PC-9 (cell line): ENCODE measurements at regions of chr2 and their contacts with region 1.

Region 1: DNA sequence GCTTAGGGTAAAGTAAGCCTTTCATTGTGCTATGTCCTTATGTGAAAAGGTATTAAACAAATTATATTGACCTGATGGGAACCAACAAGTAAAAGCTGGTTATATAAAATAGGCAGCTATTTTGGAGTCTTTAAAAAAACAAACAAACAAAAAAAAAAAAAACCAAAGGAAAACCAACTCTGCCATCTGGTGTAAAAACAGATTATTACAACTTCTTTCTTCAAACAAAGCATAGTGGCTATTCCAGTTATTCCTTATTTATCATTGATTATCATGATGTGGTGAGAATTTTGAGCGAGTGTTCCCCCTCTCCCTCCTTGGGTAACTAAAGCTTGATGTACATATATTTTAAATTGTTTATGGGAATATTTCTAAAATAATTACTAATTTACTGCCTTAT is 122.4 kb upstream of the FHL2 start:
- DNase-seq: no peak
- H3K4me3 ChIP-seq: no peak overlapping the region
- H3K27ac ChIP-seq: no peak overlapping the region
- H3K4me1 ChIP-seq: peaks cover 6% of the 10 kb centered on the region
- H3K27me3 ChIP-seq: no peaks in the 10 kb centered on the region
- CTCF ChIP-seq: peak; percentile 84

Region 2: DNA sequence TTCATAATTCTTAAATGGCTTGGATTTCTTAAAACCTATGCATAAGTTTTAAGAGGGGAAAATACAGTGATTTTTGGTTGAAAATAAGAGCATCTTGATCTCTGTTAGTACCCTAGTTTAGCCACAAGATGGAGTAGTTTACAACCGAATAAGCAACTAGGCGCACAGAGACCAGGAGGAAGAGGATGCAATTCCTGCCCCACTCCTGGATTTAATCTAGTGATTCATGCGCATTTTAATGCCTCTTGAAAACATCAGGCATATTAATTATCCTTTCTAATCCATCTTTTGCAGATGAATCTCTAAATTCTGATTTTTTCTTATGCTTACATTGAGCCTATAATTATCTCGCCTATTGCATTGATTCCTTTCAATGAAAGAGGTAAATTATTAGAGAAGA is 406.7 kb before region 1 on chr2:
- CTCF ChIA-PET with region 1: no interaction called
- POLR2A ChIA-PET with region 1: no interaction called
- intact Hi-C with region 1: loop called (anchors 5 kb)
- DNase-seq: peak in 1 of 2 experiments; percentile 46
- H3K4me3 ChIP-seq: no peak overlapping the region
- H3K27ac ChIP-seq: no peak overlapping the region
- H3K4me1 ChIP-seq: no peaks in the 10 kb centered on the region
- H3K27me3 ChIP-seq: no peaks in the 10 kb centered on the region
- CTCF ChIP-seq: peak; percentile 88

Region 3: GRCh38 chr2:105337124-105338019 is 183.8 kb before region 1 on chr2 and contains the start of gene C2orf49:
- CTCF ChIA-PET with region 1: interaction called, 4 read pairs
- POLR2A ChIA-PET with region 1: interaction called, 10 read pairs
- intact Hi-C with region 1: no loop called
- DNase-seq: peak; percentile 63 to 77
- H3K4me3 ChIP-seq: peak within 1 kb of the TSS; percentile 100
- H3K27ac ChIP-seq: peak within 1 kb of the TSS; percentile 98
- H3K4me1 ChIP-seq: peaks cover 20% of the 10 kb centered on the region
- H3K27me3 ChIP-seq: no peaks in the 10 kb centered on the region
- CTCF ChIP-seq: no peak
- total RNA-seq, gene C2orf49: 16.2 and 19.8 TPM in 2 replicates

Region 4: GRCh38 chr2:105377819-105378218 is 143.4 kb before region 1 on chr2:
- CTCF ChIA-PET with region 1: interaction called, 3 read pairs
- POLR2A ChIA-PET with region 1: no interaction called
- intact Hi-C with region 1: loop called (anchors 1 kb)
- DNase-seq: no peak
- H3K4me3 ChIP-seq: no peak overlapping the region
- H3K27ac ChIP-seq: no peak overlapping the region
- H3K4me1 ChIP-seq: peaks cover 39% of the 10 kb centered on the region
- H3K27me3 ChIP-seq: no peaks in the 10 kb centered on the region
- CTCF ChIP-seq: no peak

Region 5: DNA sequence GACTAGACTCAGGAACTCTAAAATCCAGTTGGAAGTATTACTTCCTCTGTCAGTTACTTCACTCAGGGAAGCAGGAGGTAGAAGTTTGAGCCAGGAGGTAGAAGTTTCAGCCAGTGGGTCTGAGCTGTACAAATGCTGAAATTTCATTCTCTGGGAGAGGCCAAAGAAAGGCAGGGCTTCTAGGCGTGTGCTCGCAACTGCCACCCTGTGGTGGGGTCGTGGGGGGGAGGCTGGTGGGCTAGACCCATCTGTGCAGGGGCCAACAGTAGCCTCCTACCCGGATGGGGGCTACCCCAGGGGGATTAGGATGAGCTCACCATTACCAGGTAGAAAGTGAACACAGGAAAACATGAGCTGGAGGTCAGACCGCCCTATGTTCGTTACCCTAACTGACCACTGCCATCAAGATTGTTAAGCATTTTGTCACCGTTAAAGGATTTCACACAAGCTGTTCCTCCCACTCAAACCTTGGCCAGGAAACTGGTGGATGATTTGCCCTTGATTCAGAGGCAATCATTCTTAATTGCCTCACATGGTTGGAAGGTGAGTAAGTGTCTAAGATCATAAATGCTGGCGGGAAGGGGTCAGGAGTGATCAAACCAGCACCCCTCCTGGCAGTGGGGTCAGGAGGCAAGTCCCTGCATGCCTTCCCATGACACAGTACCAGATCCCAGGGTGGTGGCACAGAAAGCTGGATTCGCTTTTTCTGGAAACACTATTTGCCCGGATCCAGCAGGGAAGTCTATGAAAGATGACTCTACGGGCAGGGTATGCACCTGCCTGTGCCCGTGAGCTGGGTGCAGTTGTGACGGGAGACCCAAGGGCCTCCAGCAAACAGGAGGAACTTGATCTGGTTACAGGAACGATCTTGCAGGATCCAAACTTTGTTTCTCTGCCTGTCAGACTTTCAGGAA is 117.2 kb before region 1 on chr2:
- CTCF ChIA-PET with region 1: interaction called, 4 read pairs
- POLR2A ChIA-PET with region 1: interaction called, 4 read pairs
- intact Hi-C with region 1: loop called (anchors 2 kb)
- DNase-seq: peak; percentile 82 to 98
- H3K4me3 ChIP-seq: peak overlapping the region; percentile 41; the same call in 1 of the 2 replicates
- H3K27ac ChIP-seq: peak overlapping the region; percentile 96
- H3K4me1 ChIP-seq: peaks cover 77% of the 10 kb centered on the region
- H3K27me3 ChIP-seq: no peaks in the 10 kb centered on the region
- CTCF ChIP-seq: peak; percentile 64

Region 6: GRCh38 chr2:105416156-105416555 is 105.0 kb before region 1 on chr2:
- CTCF ChIA-PET with region 1: no interaction called
- POLR2A ChIA-PET with region 1: no interaction called
- intact Hi-C with region 1: no loop called
- DNase-seq: no peak
- H3K4me3 ChIP-seq: no peak overlapping the region
- H3K27ac ChIP-seq: no peak overlapping the region
- H3K4me1 ChIP-seq: peaks cover 14% of the 10 kb centered on the region
- H3K27me3 ChIP-seq: no peaks in the 10 kb centered on the region
- CTCF ChIP-seq: no peak

Region 7: GRCh38 chr2:105557021-105557920 is 36.1 kb after region 1 on chr2:
- CTCF ChIA-PET with region 1: no interaction called
- POLR2A ChIA-PET with region 1: no interaction called
- intact Hi-C with region 1: no loop called
- DNase-seq: no peak
- H3K4me3 ChIP-seq: no peak overlapping the region
- H3K27ac ChIP-seq: no peak overlapping the region
- H3K4me1 ChIP-seq: peaks cover 20% of the 10 kb centered on the region
- H3K27me3 ChIP-seq: peaks cover 74% of the 10 kb centered on the region
- CTCF ChIP-seq: no peak

Region 8: GRCh38 chr2:105595536-105595935 is 74.3 kb after region 1 on chr2:
- CTCF ChIA-PET with region 1: no interaction called
- POLR2A ChIA-PET with region 1: no interaction called
- intact Hi-C with region 1: no loop called
- DNase-seq: peak; percentile 10 to 76
- H3K4me3 ChIP-seq: no peak overlapping the region
- H3K27ac ChIP-seq: no peak overlapping the region
- H3K4me1 ChIP-seq: no peaks in the 10 kb centered on the region
- H3K27me3 ChIP-seq: 0 out of 2 replicates have a peak, but pooled peaks cover 10% of the 10 kb centered on the region
- CTCF ChIP-seq: no peak

Region 9: GRCh38 chr2:105744091-105744908 is 223.1 kb after region 1 on chr2:
- CTCF ChIA-PET with region 1: no interaction called
- POLR2A ChIA-PET with region 1: no interaction called
- intact Hi-C with region 1: no loop called
- DNase-seq: peak; percentile 53 to 59
- H3K4me3 ChIP-seq: peak overlapping the region; percentile 56
- H3K27ac ChIP-seq: no peak overlapping the region
- H3K4me1 ChIP-seq: peaks cover 16% of the 10 kb centered on the region
- H3K27me3 ChIP-seq: peaks cover 9% of the 10 kb centered on the region; the same call in 1 of the 2 replicates
- CTCF ChIP-seq: no peak